HepG2 (cell line): ENCODE measurements at regions of chr15 and their contacts with region 1.

Region 1: GRCh38 chr15:69160141-69160993 is at the start of gene GLCE:
- DNase-seq: peak; percentile 90
- ATAC-seq: peak; percentile 94
- H3K4me3 ChIP-seq: peak within 1 kb of the TSS; percentile 93 to 97 (median 94)
- H3K27ac ChIP-seq: peak within 1 kb of the TSS; percentile 81
- H3K4me1 ChIP-seq: peaks cover 31% of the 10 kb centered on the region
- H3K27me3 ChIP-seq: peaks cover 0 to 3% of the 10 kb centered on the region in 2 experiments; a peak in 3 of 5 replicates
- CTCF ChIP-seq: peak; percentile 21; the same call in 1 of the 2 replicates
- EP300 ChIP-seq: no peak
- POLR2A ChIP-seq: peak; percentile 93 to 94
- RAD21 ChIP-seq: peak; percentile 48; the same call in 1 of the 2 replicates
- total RNA-seq, gene GLCE: 11.0 and 12.9 TPM in 2 replicates

Region 2: DNA sequence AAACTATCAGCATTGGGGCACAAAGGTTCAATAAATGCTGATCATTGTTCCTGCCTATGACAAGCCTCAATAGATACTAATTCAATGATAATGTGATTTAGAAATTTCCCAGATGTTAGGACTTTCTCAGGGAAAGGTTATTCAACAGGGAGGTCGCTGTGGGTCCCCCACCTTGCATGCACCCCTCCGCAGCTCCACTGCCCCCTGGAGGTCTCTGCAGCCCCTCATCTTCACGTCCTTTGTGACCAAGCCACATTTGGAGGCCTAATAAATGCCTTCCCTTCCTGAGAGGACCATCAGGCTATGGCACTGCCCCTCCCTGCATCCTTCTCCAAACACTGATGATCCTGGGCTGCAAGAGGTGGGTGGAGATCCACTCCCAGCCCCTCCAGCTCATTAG is 95.7 kb before region 1 on chr15:
- CTCF ChIA-PET with region 1: no interaction called
- POLR2A ChIA-PET with region 1: no interaction called
- in situ Hi-C with region 1: loop called (anchors 5 kb)
- intact Hi-C with region 1: loop called (anchors 1 kb)
- DNase-seq: no peak
- ATAC-seq: no peak
- H3K4me3 ChIP-seq: no peak overlapping the region
- H3K27ac ChIP-seq: no peak overlapping the region
- H3K4me1 ChIP-seq: peaks cover 28% of the 10 kb centered on the region
- H3K27me3 ChIP-seq: peaks cover 0 to 5% of the 10 kb centered on the region in 2 experiments; a peak in 2 of 5 replicates
- CTCF ChIP-seq: no peak
- EP300 ChIP-seq: no peak
- POLR2A ChIP-seq: no peak
- RAD21 ChIP-seq: no peak

Region 3: DNA sequence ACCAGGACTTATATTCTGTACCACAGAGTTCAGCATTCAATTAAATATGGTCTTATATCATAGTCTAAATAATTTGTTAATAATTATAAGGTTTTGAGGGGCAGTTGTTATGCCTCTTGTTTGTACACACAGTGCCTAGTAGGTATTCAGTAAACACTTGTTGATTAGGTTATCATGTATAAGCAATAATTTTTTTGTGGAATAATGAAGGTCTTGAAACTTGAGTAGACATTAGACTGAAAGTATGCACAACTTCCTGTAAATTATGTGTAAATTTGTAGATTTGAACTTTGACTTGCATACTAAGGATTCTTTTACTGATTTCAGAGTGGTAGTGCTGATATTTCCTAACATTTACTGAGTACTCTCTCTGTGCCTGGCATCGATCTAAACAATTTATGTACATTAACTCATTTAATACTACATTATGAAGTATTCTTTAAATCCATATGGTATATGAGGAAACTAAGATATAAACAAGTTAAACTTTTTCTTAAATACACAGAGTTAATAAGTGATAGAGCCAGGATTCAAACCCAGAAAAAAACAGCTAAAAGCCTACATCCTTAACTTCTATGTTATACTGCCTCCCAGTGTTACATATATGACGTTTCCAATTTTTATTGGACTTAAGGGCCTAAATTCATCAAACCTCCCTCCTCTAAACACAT is 65.1 kb after region 1 on chr15:
- CTCF ChIA-PET with region 1: no interaction called
- POLR2A ChIA-PET with region 1: interaction called, 7 read pairs
- in situ Hi-C with region 1: loop called (anchors 5 kb)
- intact Hi-C with region 1: loop called (anchors 2 kb)
- DNase-seq: peak; percentile 49
- ATAC-seq: peak; percentile 14; the same call in 1 of the 3 replicates
- H3K4me3 ChIP-seq: peak overlapping the region in 1 of 3 experiments; percentile 38; a peak in 1 of 6 replicates
- H3K27ac ChIP-seq: peak overlapping the region; percentile 74
- H3K4me1 ChIP-seq: peaks cover 52% of the 10 kb centered on the region
- H3K27me3 ChIP-seq: no peaks in the 10 kb centered on the region
- CTCF ChIP-seq: peak; percentile 71
- EP300 ChIP-seq: no peak
- POLR2A ChIP-seq: no peak
- RAD21 ChIP-seq: peak; percentile 66

Region 4: GRCh38 chr15:69394556-69395282 is 234.4 kb after region 1 on chr15:
- CTCF ChIA-PET with region 1: no interaction called
- POLR2A ChIA-PET with region 1: no interaction called
- in situ Hi-C with region 1: no loop called
- intact Hi-C with region 1: loop called (anchors 10 kb)
- DNase-seq: peak; percentile 31
- ATAC-seq: peak; percentile 92
- H3K4me3 ChIP-seq: no peak overlapping the region; a peak in 1 of 6 replicates
- H3K27ac ChIP-seq: no peak overlapping the region
- H3K4me1 ChIP-seq: peaks cover 26% of the 10 kb centered on the region
- H3K27me3 ChIP-seq: peaks cover 2 to 22% of the 10 kb centered on the region in 2 experiments; a peak in 4 of 5 replicates
- CTCF ChIP-seq: peak; percentile 94
- EP300 ChIP-seq: no peak
- POLR2A ChIP-seq: no peak
- RAD21 ChIP-seq: peak; percentile 85